ENCODE measurements at regions of chr5 and their contacts with region 1.

Region 1: DNA sequence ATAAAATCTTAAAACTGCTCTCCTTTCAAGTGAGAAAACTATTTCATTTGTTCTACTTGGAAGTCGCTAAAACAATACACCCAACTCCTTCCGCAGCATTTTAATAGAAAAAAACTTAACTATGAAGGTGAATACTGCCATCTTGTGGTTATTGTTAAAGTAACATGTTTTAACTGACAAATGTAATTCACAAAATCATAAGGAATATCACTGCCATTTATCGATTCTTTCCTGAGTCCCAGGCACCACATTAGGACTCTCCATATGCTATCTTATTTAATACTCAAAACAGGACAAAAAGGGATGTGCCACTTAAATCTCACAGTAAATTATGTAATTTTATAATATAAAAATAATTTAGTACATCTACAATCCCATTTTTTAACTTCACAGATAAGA is 130.5 kb upstream of the ITGA1 start:
- DNase-seq: no peak
- H3K4me3 ChIP-seq: no peak overlapping the region
- H3K27ac ChIP-seq: no peak overlapping the region
- H3K4me1 ChIP-seq: no peaks in the 10 kb centered on the region
- H3K27me3 ChIP-seq: no peaks in the 10 kb centered on the region
- CTCF ChIP-seq: peak; percentile 48 to 49

Region 2: GRCh38 chr5:50962934-50963872 is 1694.0 kb before region 1 on chr5:
- intact Hi-C with region 1: loop called (anchors 10 kb)
- DNase-seq: peak; percentile 60 to 77
- H3K4me3 ChIP-seq: peak overlapping the region; percentile 13 to 42
- H3K27ac ChIP-seq: no peak overlapping the region
- H3K4me1 ChIP-seq: peaks cover 0 to 35% (median 26%) of the 10 kb centered on the region in 4 donors
- H3K27me3 ChIP-seq: peaks cover 0 to 87% of the 10 kb centered on the region in 2 donors
- CTCF ChIP-seq: peak; percentile 65 to 77

Region 3: GRCh38 chr5:53019320-53019719 is 362.1 kb after region 1 on chr5:
- intact Hi-C with region 1: no loop called
- DNase-seq: no peak
- H3K4me3 ChIP-seq: no peak overlapping the region
- H3K27ac ChIP-seq: no peak overlapping the region
- H3K4me1 ChIP-seq: peaks cover 0 to 4% (median 0%) of the 10 kb centered on the region in 4 donors
- H3K27me3 ChIP-seq: no peaks in the 10 kb centered on the region
- CTCF ChIP-seq: no peak

Region 4: DNA sequence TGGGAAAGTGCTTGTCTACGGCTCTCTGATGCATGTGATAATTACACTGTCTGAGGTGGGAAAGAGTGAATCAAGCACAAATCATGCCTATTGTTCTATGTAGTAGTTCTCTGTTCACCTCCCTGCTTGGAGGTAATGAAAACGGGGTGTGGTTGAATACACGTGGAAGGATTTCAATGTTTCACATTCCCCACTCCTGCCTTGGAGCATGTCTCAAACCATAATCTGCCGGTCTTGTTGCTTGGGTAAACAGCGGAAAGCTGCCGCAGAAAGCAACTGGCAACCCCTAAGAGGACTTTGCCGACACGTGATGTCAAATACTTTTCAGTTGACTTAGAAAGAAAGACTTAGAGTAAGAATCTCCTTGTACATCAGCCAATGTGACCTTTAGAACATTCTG is 515.8 kb after region 1 on chr5:
- intact Hi-C with region 1: no loop called
- DNase-seq: no peak
- H3K4me3 ChIP-seq: no peak overlapping the region
- H3K27ac ChIP-seq: no peak overlapping the region
- H3K4me1 ChIP-seq: peaks cover 0 to 10% (median 5%) of the 10 kb centered on the region in 4 donors
- H3K27me3 ChIP-seq: no peaks in the 10 kb centered on the region
- CTCF ChIP-seq: no peak